Motor neuron (in vitro differentiated cells): ENCODE measurements at regions of chr17 and their contacts with region 1.

Region 1: DNA sequence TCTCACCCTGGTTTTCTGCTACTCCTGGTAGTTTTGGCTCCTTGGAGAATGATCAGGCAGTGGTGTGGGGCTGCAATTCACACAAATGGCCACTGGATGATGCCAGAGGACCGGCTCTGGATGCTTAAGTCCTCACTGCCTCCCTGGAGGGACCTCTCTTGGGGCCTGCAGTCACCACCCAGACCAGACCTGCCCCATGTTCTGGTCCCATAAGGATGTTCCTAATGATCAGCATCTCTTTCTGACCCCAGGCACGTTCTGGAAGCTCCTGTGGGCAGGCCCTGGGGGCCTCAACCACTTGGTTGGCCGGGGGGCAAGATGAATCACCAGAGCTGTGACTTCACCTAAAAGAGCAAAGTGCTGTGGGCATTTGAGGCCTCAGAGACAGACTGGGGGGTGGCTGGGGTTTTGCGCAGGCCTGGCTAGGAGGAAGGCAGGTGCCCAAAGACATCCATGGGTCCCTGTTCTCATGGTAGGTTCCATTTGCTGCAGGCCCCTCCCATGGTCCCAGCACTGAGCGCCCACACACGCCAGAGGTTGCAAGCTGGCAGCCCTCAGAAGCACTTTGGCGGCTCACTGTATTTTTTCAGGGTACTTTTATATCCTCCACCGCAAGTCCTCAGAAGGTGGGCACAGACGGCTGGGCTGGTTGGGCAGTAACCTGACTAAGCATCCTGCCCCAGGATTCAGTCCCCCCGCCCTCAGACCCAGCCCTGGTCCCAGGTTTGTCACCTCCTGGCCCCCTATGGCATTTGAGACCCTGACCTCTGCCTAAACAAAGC is 53.2 kb downstream of the NT5M start:
- ATAC-seq: peak; percentile 79 to 89 (median 84)
- H3K4me3 ChIP-seq: no peak overlapping the region
- H3K27ac ChIP-seq: no peak overlapping the region
- H3K4me1 ChIP-seq: peaks cover 6 to 7% of the 10 kb centered on the region in 2 donors

Region 2: GRCh38 chr17:17496189-17497064 is 140.1 kb after region 1 on chr17 and contains the start of gene RASD1:
- in situ Hi-C with region 1: loop called in 1 of 9 experiments (anchors 10 kb)
- ATAC-seq: peak; percentile 80 to 89 (median 82)
- H3K4me3 ChIP-seq: peak within 1 kb of the TSS; percentile 38 to 55 (median 45)
- H3K27ac ChIP-seq: peak within 1 kb of the TSS; percentile 50 to 80
- H3K4me1 ChIP-seq: peaks cover 10 to 11% of the 10 kb centered on the region in 2 donors
- total RNA-seq, gene RASD1: 0.46 to 37.1 (median 6.7) TPM

Region 3: DNA sequence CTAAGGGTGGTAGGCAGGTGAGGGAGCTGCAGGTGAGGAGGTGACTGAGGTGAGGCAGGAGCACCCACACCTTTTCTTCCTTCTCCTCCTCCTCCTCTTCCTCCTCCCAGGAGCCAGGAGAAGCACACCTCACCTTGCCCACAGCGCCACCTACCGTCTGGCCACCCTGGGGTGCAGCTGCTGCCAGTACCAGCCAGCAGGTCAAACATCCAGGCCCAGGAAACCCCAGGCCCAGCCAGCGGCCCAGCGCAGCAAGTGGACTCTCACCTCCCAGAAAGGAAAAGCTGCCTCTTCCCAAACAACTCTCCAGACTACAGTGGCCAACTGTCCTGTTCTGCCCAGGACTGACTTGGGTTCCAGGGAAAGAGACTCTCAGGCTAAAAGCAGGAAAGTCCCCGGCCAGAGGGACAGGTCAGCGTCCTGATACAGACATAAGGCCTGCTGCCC is 212.4 kb after region 1 on chr17:
- in situ Hi-C with region 1: loop called in 1 of 9 experiments (anchors 10 kb)
- ATAC-seq: peak in 6 of 8 experiments; percentile 44 to 84 (median 56)
- H3K4me3 ChIP-seq: no peak overlapping the region
- H3K27ac ChIP-seq: no peak overlapping the region
- H3K4me1 ChIP-seq: no peaks in the 10 kb centered on the region

Region 4: DNA sequence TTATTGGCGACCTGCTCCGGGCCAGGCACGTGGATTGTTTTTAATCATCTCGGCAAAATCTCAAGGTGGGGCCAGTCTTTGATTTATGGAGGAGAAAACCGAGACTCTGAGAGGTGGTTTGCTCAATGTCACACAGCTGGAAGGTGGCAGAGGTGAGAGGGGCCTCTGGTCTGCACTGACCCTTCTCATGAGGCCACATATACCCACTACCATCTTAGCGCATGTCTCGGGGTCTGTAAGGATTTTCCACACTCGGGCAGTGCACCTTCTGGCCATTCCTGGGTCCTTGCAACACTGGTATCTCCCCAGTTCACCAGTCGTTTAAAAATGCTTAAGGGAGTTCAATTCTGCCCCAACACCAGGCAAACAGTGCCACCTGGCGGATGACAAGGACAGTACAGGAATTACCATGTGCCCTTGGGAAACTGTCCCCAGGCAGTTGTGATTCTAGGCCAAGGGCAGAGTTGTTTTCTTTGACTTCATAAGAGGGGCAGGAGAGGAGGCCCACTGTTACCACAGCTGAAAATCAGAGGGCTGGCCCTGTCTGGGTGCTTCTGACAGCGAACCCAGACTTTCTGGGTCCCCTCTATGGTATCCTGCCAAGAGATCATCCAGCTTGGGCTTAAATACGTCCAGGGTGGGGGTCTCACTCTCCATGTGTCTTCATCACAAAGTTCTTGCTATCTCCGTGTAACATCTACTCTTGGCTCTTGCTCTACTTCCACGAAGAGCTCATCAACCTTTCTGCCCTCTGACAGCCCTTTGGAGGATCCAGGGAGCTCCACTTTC is 285.5 kb after region 1 on chr17:
- in situ Hi-C with region 1: loop called (anchors 10 to 25 kb)
- ATAC-seq: peak; percentile 84 to 95 (median 92)
- H3K4me3 ChIP-seq: no peak overlapping the region
- H3K27ac ChIP-seq: no peak overlapping the region
- H3K4me1 ChIP-seq: peaks cover 0 to 2% of the 10 kb centered on the region in 2 donors

Region 5: GRCh38 chr17:18038861-18039534 is 682.7 kb after region 1 on chr17 and contains the starts of genes ATPAF2 and GID4:
- in situ Hi-C with region 1: loop called in 1 of 9 experiments (anchors 25 kb)
- ATAC-seq: peak; percentile 86 to 93 (median 90)
- H3K4me3 ChIP-seq: peak within 1 kb of the TSS; percentile 52 to 82 (median 57)
- H3K27ac ChIP-seq: peak within 1 kb of the TSS; percentile 44 to 65
- H3K4me1 ChIP-seq: peaks cover 13 to 16% of the 10 kb centered on the region in 2 donors
- total RNA-seq, gene ATPAF2: 12.7 to 38.9 (median 23.2) TPM
- total RNA-seq, gene GID4: 6.0 to 13.0 (median 8.2) TPM